Calu3 (cell line): ENCODE measurements at regions of chr18 and their contacts with region 1.

Region 1: GRCh38 chr18:25042641-25043051 is 309.3 kb downstream of the ZNF521 start:
- DNase-seq: no peak
- H3K4me3 Mint-ChIP-seq: no peak overlapping the region
- H3K27ac Mint-ChIP-seq: no peak overlapping the region
- H3K4me1 Mint-ChIP-seq: no peaks in the 10 kb centered on the region
- H3K27me3 Mint-ChIP-seq: peaks cover 66% of the 10 kb centered on the region
- CTCF ChIP-seq: no peak

Region 2: GRCh38 chr18:24915547-24915946 is 127.1 kb before region 1 on chr18:
- CTCF ChIA-PET with region 1: no interaction called
- intact Hi-C with region 1: loop called (anchors 5 kb)
- DNase-seq: no peak
- H3K4me3 Mint-ChIP-seq: no peak overlapping the region
- H3K27ac Mint-ChIP-seq: no peak overlapping the region
- H3K4me1 Mint-ChIP-seq: peaks cover 6% of the 10 kb centered on the region
- H3K27me3 Mint-ChIP-seq: peaks cover 88% of the 10 kb centered on the region
- CTCF ChIP-seq: no peak

Region 3: DNA sequence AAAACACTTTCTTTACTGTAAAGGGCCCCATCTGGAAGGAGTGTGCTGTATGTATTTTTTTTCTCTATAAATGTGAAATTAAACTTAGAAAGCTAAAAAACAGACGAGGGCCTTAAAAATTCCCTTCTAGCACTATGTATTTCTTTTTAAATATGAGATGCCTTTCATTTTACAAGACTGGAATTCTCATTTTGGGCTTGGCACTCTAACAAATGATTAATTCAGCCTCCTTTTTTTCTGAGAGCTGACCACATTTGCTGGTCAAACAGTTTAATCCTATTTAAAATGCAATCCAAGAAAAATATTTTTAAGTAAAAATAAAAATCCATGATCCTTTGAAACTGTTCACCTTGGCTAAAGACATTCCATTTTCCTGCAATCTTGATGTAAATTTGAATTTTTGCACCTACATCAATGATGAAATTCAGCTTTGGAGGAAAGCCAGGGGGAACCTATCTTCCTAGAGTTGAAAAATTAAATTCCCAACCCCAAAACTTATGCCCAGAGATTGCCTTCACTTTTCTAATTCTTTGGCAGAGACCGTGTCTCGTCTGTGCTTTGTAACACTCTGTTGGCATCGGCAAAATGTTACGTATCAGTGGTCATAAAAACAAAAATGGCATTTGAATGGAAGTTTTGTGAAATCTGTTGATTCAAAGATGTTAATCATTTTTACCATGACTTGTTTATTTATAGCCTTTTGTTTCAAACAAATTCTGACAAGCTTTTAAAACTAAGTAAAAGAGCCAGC is 24.8 kb after region 1 on chr18:
- CTCF ChIA-PET with region 1: no interaction called
- intact Hi-C with region 1: loop called (anchors 1 kb)
- DNase-seq: no peak
- H3K4me3 Mint-ChIP-seq: no peak overlapping the region
- H3K27ac Mint-ChIP-seq: no peak overlapping the region
- H3K4me1 Mint-ChIP-seq: no peaks in the 10 kb centered on the region
- H3K27me3 Mint-ChIP-seq: peaks cover 60% of the 10 kb centered on the region
- CTCF ChIP-seq: no peak